Head of caudate nucleus (tissue), 42 donors: ENCODE measurements at regions of chr12 and their contacts with region 1.

Region 1: DNA sequence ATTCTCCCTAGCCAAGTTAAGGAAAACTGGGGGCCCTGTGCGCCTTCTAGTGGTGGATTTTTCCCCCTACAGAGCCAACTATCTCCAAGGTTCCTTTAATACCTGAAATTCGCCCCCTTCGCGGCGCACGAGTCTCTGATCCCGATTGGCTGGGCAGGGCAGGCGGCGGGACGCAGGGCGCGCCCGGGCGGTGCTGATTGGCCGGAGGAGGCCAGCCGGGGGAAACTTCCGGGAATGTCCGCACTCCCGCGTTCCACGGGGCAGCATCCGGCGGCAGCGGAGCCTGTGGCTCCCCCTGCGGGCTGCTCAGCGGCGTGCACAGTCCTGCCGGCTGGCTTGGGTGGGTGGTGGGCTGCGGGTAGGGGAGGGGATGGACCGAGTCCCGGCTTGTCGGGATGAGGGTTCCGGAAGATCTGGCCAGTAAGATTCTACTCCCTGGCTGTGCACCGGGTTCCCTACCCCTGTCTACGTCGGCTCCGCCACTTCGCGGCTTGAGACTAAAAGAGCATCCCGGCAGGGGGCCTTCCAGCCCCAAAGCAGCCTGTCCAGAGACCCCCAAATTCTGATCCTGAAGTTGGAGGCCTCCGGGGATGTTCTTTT is at the start of gene NABP2:
- DNase-seq: peak; percentile 95 to 99 (median 98)

Region 2: DNA sequence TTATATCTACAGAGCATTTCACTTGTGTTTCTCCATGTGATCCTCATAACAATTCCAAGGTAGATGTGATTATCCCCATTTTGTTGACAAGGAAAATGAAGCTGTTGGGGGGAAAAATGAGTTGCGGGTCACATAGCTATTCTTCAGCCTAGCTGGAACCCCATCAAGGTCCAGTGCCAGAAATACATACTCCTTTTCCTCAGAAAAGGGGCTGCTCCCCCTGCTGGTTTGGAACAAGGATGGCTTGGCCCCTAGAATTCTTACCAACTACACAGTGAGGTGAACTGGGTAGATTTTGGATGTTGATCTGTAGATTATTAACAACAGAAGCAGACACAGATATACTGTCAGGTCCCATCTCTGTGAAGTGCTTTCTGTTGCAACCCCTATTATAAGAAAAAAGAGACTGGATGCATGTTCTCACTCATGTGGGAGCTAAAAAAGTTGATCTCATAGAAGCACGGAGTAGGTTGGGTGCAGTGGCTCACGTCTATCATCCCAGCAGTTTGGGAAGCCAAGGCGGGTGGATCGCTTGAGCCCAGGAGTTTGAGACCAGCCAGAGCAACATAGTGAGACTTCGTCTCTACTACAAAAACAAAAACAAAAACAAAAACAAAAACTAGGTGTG is 194.4 kb before region 1 on chr12:
- intact Hi-C with region 1: no loop called
- DNase-seq: peak in 36 of 42 donors; percentile 15 to 73 (median 46)

Region 3: GRCh38 chr12:56127888-56128669 is 96.1 kb before region 1 on chr12 and contains the start of gene ESYT1:
- intact Hi-C with region 1: loop called (anchors 5 kb)
- DNase-seq: peak; percentile 87 to 99 (median 96)

Region 4: DNA sequence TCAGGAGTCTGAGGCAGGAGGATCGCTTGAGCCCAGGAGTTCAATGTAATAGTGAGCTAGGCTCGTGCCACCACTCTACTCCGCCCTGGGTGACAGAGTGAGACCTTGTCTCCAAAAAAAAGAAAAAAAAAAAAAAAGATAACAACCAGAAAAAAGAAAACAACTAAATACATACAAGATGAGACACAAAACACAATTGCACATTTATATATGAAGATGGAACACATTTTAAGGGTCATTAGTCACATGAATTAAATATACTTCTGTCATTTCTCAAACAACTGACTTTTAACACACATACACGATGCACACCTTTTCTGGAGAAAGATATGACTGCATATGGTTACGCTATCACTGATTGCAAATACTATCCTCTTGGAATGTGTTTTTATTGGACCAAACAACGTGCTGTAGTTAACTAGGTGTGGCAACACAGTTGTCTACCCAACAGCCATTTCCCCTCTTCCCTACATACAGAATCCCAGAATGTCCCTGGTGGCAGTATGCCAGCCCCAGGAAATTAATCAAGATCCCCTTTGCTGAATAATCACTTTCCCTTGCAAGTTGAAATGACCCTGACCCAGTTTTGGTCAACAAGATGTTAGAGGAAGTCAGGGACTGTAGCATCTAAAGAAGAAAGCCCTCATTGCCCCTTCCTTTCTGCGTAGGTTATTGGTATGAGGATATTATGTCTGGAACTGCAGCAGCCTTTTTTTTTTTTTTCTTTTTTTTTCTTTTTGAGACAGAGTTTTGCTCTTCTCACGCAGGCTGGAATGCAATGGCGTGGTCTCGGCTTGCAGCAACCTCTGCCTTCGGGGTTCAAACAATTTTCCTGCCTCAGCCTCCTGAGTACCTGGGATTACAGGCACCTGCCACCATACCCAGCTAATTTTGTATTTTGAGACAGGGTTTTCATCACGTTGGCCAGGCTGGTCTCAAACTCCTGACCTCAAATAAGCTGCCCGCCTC is 77.4 kb before region 1 on chr12:
- intact Hi-C with region 1: no loop called
- DNase-seq: no peak

Region 5: GRCh38 chr12:56158029-56158925 is 65.9 kb before region 1 on chr12 and contains the start of gene MYL6:
- intact Hi-C with region 1: no loop called
- DNase-seq: peak; percentile 91 to 100 (median 98)

Region 6: GRCh38 chr12:56189176-56189917 is 34.9 kb before region 1 on chr12 and contains the start of gene SMARCC2:
- intact Hi-C with region 1: loop called (anchors 2 kb)
- DNase-seq: peak; percentile 53 to 93 (median 84)

Region 7: DNA sequence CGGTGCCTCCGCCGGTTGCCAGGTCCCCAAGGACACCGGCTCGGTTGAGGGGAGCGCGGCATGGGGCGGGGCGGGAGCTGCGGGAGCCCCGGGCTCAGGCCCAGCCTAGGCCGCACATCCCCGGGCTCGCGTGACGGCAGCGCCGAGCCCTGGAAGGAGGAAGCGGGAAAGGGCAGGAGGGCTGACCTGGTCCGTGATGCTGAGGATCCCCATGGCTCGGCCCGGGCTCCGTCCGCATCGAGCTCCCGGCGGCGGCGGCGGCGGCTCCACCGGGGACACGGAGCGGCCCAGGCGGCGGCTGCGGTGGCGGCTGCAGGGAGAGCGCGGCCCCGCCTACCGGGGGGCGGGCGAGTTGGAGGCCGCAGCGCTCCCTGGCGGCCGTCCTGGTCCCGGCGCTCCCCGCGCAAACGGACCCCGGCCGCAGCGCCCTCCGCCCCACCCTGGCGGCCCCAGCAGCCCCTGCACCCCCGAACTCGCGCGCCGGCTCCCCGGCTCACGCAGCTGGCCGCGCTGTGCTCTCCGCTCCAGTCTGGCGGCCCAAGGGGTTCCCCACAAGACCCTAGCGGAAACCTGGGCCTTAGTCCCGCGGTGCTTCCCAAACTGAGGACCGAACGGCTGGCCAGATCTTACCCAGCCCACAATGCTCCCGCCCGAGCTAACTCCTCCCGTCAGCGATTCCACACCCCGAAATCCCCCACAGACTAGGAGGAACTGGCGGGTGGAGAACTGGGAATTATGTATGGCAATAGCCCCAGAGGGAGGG is 34.0 kb after region 1 on chr12 and contains the start of gene ANKRD52:
- intact Hi-C with region 1: loop called (anchors 5 kb)
- DNase-seq: peak; percentile 19 to 88 (median 80)